Caco-2 (cell line): ENCODE measurements at regions of chr14 and their contacts with region 1.

Region 1: GRCh38 chr14:69153131-69153872 is 383 bp upstream of the DCAF5 start:
- DNase-seq: peak; percentile 93 to 97
- H3K4me3 ChIP-seq: peak overlapping the region; percentile 87
- H3K4me3 Mint-ChIP-seq: peak overlapping the region; percentile 89
- H3K27ac Mint-ChIP-seq: peak overlapping the region; percentile 87
- H3K4me1 ChIP-seq: 0 out of 2 replicates have a peak, but pooled peaks cover 14% of the 10 kb centered on the region
- H3K4me1 Mint-ChIP-seq: peaks cover 12% of the 10 kb centered on the region
- H3K27me3 ChIP-seq: no peaks in the 10 kb centered on the region
- H3K27me3 Mint-ChIP-seq: no peaks in the 10 kb centered on the region
- CTCF ChIP-seq: no peak

Region 2: DNA sequence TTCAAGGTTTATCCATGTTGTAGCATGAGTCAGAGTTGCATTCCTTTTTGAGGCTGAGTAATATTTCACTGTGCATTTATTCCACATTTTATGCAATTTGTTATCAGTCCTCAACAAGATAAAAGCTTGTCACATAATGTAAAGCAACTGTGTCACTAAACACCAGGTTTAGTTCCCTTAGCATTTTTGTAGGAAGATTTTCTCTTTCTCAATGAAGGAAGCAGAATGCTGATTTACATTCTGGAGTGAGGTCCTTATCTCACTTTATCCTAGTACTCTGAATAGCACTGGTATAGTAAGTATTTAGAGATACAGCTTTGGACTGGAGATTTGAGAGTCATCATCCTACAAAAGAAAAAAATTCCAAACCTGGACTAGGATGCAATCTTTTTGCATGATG is 28.2 kb after region 1 on chr14:
- CTCF ChIA-PET with region 1: no interaction called
- POLR2A ChIA-PET with region 1: no interaction called
- intact Hi-C with region 1: no loop called
- DNase-seq: no peak
- H3K4me3 ChIP-seq: no peak overlapping the region
- H3K4me3 Mint-ChIP-seq: no peak overlapping the region
- H3K27ac Mint-ChIP-seq: no peak overlapping the region
- H3K4me1 ChIP-seq: no peaks in the 10 kb centered on the region
- H3K4me1 Mint-ChIP-seq: no peaks in the 10 kb centered on the region
- H3K27me3 ChIP-seq: no peaks in the 10 kb centered on the region
- H3K27me3 Mint-ChIP-seq: no peaks in the 10 kb centered on the region
- CTCF ChIP-seq: no peak

Region 3: GRCh38 chr14:69191340-69192111 is 38.2 kb after region 1 on chr14 and contains the start of gene EXD2:
- CTCF ChIA-PET with region 1: interaction called, 4 read pairs
- POLR2A ChIA-PET with region 1: interaction called, 3 read pairs
- intact Hi-C with region 1: loop called (anchors 1 kb)
- DNase-seq: peak; percentile 94 to 95
- H3K4me3 ChIP-seq: peak within 1 kb of the TSS; percentile 78
- H3K4me3 Mint-ChIP-seq: peak within 1 kb of the TSS; percentile 93
- H3K27ac Mint-ChIP-seq: peak within 1 kb of the TSS; percentile 96
- H3K4me1 ChIP-seq: peaks cover 8% of the 10 kb centered on the region; the same call in 1 of the 2 replicates
- H3K4me1 Mint-ChIP-seq: no peaks in the 10 kb centered on the region
- H3K27me3 ChIP-seq: no peaks in the 10 kb centered on the region
- H3K27me3 Mint-ChIP-seq: no peaks in the 10 kb centered on the region
- CTCF ChIP-seq: no peak
- total RNA-seq, gene EXD2: 22.5 and 23.9 TPM in 2 replicates

Region 4: DNA sequence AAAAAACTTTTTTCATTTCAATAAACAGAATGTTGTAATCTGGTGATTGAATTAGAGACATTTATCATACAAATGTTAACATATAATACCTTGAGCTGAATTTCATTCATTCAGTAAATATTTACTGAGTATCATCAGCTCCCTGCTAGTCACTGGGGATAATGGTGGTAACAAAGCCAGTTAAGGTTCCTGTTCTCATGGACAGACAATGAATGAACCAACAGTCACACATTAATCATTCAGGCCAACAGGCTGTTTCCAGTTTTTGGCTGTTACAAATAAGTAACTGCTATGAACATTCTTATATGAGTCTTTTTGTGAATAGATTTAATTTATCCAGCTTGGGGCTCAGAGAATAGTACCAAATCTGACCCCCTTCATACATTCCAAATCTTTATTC is 51.5 kb after region 1 on chr14:
- CTCF ChIA-PET with region 1: no interaction called
- POLR2A ChIA-PET with region 1: no interaction called
- intact Hi-C with region 1: no loop called
- DNase-seq: no peak
- H3K4me3 ChIP-seq: no peak overlapping the region
- H3K4me3 Mint-ChIP-seq: no peak overlapping the region
- H3K27ac Mint-ChIP-seq: no peak overlapping the region
- H3K4me1 ChIP-seq: no peaks in the 10 kb centered on the region
- H3K4me1 Mint-ChIP-seq: no peaks in the 10 kb centered on the region
- H3K27me3 ChIP-seq: no peaks in the 10 kb centered on the region
- H3K27me3 Mint-ChIP-seq: no peaks in the 10 kb centered on the region
- CTCF ChIP-seq: no peak

Region 5: DNA sequence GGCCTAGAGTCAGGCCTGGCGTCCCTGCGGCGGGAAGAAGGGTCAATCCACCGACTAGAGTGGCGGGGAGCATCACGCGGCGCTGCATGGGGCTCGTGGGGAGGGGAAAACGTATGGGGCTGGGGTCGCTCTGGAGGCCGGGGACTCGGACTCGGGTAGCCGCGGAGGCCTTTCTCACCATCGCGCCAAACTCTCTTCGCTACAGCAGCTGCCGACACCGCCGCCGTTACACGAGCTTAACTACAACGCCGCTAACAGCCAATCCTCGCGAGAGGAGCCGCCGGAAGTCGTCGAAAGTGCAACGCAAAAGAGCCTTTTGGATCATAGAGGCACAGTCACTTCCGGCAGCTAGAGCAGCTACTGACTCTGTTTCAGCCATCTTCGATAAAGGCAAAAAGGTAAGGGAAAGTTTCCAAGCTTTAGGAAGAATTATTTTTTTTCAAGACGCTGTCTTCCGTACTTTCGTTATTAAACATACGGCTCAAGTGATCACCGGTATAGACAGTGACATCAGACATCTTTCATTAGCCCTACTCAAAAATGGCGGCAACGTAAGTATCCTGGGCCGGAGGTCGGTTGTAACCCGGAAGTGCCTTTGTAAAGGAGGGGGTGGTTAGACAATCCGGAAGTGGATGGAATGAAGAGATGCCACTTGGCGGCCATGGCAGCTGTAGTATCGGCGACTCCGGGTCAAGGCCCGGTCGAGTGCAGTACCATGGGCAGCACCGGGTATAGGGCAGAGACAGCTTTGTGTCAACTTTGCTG is 244.9 kb after region 1 on chr14 and contains the starts of genes ERH and SLC39A9:
- CTCF ChIA-PET with region 1: no interaction called
- POLR2A ChIA-PET with region 1: no interaction called
- intact Hi-C with region 1: loop called (anchors 2 kb)
- DNase-seq: peak; percentile 93 to 95
- H3K4me3 ChIP-seq: peak within 1 kb of the TSS; percentile 74
- H3K4me3 Mint-ChIP-seq: peak within 1 kb of the TSS; percentile 92
- H3K27ac Mint-ChIP-seq: peak within 1 kb of the TSS; percentile 98
- H3K4me1 ChIP-seq: peaks cover 3% of the 10 kb centered on the region; the same call in 1 of the 2 replicates
- H3K4me1 Mint-ChIP-seq: peaks cover 9% of the 10 kb centered on the region
- H3K27me3 ChIP-seq: no peaks in the 10 kb centered on the region
- H3K27me3 Mint-ChIP-seq: no peaks in the 10 kb centered on the region
- CTCF ChIP-seq: no peak
- total RNA-seq, gene ERH: 365 and 388 TPM in 2 replicates
- total RNA-seq, gene SLC39A9: 94.2 and 96.4 TPM in 2 replicates